Activated B cell treated with CpG ODN at 0.5 μM for 24 hours (primary cell): ENCODE measurements at regions of chr2 and their contacts with region 1.

Region 1: GRCh38 chr2:58019209-58019608 is 27.4 kb upstream of the VRK2 start:
- DNase-seq: no peak
- ATAC-seq: no peak
- H3K4me3 Mint-ChIP-seq: no peak overlapping the region
- H3K27ac Mint-ChIP-seq: no peak overlapping the region
- H3K4me1 Mint-ChIP-seq: peaks cover 28% of the 10 kb centered on the region
- H3K27me3 Mint-ChIP-seq: no peaks in the 10 kb centered on the region
- CTCF ChIP-seq: no peak

Region 2: DNA sequence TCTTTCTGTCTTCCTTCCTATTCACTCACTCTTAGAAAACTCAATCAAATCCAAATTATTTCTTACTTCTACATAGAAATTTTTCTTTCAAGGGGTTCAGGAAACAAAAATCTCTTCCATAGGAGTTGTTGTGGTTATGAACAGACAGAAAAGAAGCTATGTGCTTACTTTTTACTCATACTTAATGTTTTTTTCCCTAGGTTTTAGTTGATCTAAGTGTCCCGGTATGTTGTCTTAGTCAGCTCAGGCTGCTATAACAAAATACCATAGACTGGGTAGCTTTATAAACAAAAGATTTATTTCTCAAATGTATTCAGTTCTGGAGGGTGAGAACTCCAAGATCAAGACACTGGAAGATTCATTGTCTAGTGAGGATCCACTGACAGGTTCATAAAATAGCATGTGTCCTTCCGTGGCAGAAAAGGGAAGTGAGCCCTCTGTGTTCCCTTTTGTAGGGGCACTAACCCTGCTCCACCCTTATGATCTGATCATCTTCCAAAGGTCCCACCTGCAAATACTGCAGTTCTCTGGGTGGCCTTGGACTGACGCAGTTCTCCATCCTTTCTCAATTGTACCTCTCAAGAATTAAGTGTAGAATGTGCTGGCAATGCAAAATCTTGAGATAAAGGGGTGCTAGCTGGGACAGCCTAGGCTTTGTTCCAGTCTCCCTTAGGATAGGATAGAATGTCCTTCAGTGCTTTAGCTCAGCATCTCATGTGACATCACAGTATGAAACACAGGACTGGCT is 13.0 kb after region 1 on chr2:
- CTCF ChIA-PET with region 1: no interaction called
- POLR2A ChIA-PET with region 1: interaction called, 27 read pairs
- intact Hi-C with region 1: loop called (anchors 1 kb)
- DNase-seq: no peak
- ATAC-seq: peak; percentile 85
- H3K4me3 Mint-ChIP-seq: peak overlapping the region; percentile 16
- H3K27ac Mint-ChIP-seq: peak overlapping the region; percentile 59
- H3K4me1 Mint-ChIP-seq: peaks cover 55% of the 10 kb centered on the region
- H3K27me3 Mint-ChIP-seq: no peaks in the 10 kb centered on the region
- CTCF ChIP-seq: no peak

Region 3: GRCh38 chr2:58039170-58039611 is 20.0 kb after region 1 on chr2:
- CTCF ChIA-PET with region 1: no interaction called
- POLR2A ChIA-PET with region 1: interaction called, 27 read pairs
- intact Hi-C with region 1: loop called (anchors 2 kb)
- DNase-seq: no peak
- ATAC-seq: peak; percentile 64
- H3K4me3 Mint-ChIP-seq: peak overlapping the region; percentile 73
- H3K27ac Mint-ChIP-seq: peak overlapping the region; percentile 90
- H3K4me1 Mint-ChIP-seq: peaks cover 64% of the 10 kb centered on the region
- H3K27me3 Mint-ChIP-seq: no peaks in the 10 kb centered on the region
- CTCF ChIP-seq: no peak